Dendritic cell treated with granulocyte-macrophage colony-stimulating factor and Interleukin-4, amounts not matched to agents 40 ng/mL and 50 ng/mL, for 4 days (primary cell): ENCODE measurements at regions of chr15 and their contacts with region 1.

Region 1: GRCh38 chr15:64982472-64982871 is 7.2 kb downstream of the SPG21 start:
- H3K4me3 Mint-ChIP-seq: no peak overlapping the region
- H3K27ac Mint-ChIP-seq: peak overlapping the region; percentile 43
- H3K4me1 Mint-ChIP-seq: peaks cover 64% of the 10 kb centered on the region
- H3K27me3 Mint-ChIP-seq: no peaks in the 10 kb centered on the region

Region 2: GRCh38 chr15:65028921-65029735 is 46.7 kb after region 1 on chr15 and contains the start of gene MTFMT:
- intact Hi-C with region 1: loop called (anchors 5 kb)
- H3K4me3 Mint-ChIP-seq: peak within 1 kb of the TSS; percentile 86
- H3K27ac Mint-ChIP-seq: peak within 1 kb of the TSS; percentile 80
- H3K4me1 Mint-ChIP-seq: peaks cover 44% of the 10 kb centered on the region
- H3K27me3 Mint-ChIP-seq: peaks cover 19% of the 10 kb centered on the region